Panc1 (cell line): ENCODE measurements at regions of chr5 and their contacts with region 1.

Region 1: GRCh38 chr5:57082441-57083067 is 91.3 kb upstream of the GPBP1 start:
- DNase-seq: peak; percentile 5
- ATAC-seq: peak; percentile 71; the same call in 1 of the 2 replicates
- H3K4me3 ChIP-seq: no peak overlapping the region
- H3K27ac ChIP-seq: no peak overlapping the region
- H3K4me1 ChIP-seq: no peaks in the 10 kb centered on the region
- H3K27me3 ChIP-seq: no peaks in the 10 kb centered on the region
- CTCF ChIP-seq: peak; percentile 73

Region 2: GRCh38 chr5:56951946-56952691 is 130.4 kb before region 1 on chr5 and contains the start of gene MIER3:
- CTCF ChIA-PET with region 1: no interaction called
- POLR2A ChIA-PET with region 1: no interaction called
- in situ Hi-C with region 1: no loop called
- intact Hi-C with region 1: loop called (anchors 10 kb)
- DNase-seq: no peak
- ATAC-seq: peak; percentile 99
- H3K4me3 ChIP-seq: peak within 1 kb of the TSS; percentile 82 to 84
- H3K27ac ChIP-seq: peak within 1 kb of the TSS; percentile 85
- H3K4me1 ChIP-seq: peaks cover 10% of the 10 kb centered on the region
- H3K27me3 ChIP-seq: peaks cover 12% of the 10 kb centered on the region; the same call in 1 of the 2 replicates
- CTCF ChIP-seq: no peak
- total RNA-seq, gene MIER3: 29.7 TPM

Region 3: GRCh38 chr5:57119031-57119430 is 36.5 kb after region 1 on chr5:
- CTCF ChIA-PET with region 1: interaction called, 13 read pairs
- POLR2A ChIA-PET with region 1: no interaction called
- in situ Hi-C with region 1: no loop called
- intact Hi-C with region 1: no loop called
- DNase-seq: no peak
- ATAC-seq: no peak
- H3K4me3 ChIP-seq: no peak overlapping the region
- H3K27ac ChIP-seq: no peak overlapping the region
- H3K4me1 ChIP-seq: no peaks in the 10 kb centered on the region
- H3K27me3 ChIP-seq: no peaks in the 10 kb centered on the region
- CTCF ChIP-seq: no peak

Region 4: GRCh38 chr5:57258052-57258451 is 175.5 kb after region 1 on chr5:
- CTCF ChIA-PET with region 1: no interaction called
- POLR2A ChIA-PET with region 1: no interaction called
- in situ Hi-C with region 1: no loop called
- intact Hi-C with region 1: no loop called
- DNase-seq: no peak
- ATAC-seq: no peak
- H3K4me3 ChIP-seq: no peak overlapping the region
- H3K27ac ChIP-seq: no peak overlapping the region
- H3K4me1 ChIP-seq: no peaks in the 10 kb centered on the region
- H3K27me3 ChIP-seq: no peaks in the 10 kb centered on the region
- CTCF ChIP-seq: no peak